ENCODE measurements at regions of chr19 and their contacts with region 1.

Region 1: DNA sequence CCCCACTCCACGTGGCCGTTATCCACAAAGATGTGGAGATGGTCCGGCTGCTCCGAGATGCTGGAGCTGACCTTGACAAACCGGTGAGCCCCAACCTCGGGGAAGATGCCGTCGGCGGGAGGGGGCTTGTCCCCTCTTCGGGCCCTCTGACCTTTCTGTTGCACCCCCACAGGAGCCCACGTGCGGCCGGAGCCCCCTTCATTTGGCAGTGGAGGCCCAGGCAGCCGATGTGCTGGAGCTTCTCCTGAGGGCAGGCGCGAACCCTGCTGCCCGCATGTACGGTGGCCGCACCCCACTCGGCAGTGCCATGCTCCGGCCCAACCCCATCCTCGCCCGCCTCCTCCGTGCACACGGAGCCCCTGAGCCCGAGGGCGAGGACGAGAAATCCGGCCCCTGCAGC is 4.8 kb downstream of the CCER2 start:
- DNase-seq: no peak
- H3K4me3 Mint-ChIP-seq: no peak overlapping the region
- H3K27ac Mint-ChIP-seq: no peak overlapping the region
- H3K4me1 Mint-ChIP-seq: no peaks in the 10 kb centered on the region
- H3K27me3 Mint-ChIP-seq: no peaks in the 10 kb centered on the region
- CTCF ChIP-seq: no peak

Region 2: DNA sequence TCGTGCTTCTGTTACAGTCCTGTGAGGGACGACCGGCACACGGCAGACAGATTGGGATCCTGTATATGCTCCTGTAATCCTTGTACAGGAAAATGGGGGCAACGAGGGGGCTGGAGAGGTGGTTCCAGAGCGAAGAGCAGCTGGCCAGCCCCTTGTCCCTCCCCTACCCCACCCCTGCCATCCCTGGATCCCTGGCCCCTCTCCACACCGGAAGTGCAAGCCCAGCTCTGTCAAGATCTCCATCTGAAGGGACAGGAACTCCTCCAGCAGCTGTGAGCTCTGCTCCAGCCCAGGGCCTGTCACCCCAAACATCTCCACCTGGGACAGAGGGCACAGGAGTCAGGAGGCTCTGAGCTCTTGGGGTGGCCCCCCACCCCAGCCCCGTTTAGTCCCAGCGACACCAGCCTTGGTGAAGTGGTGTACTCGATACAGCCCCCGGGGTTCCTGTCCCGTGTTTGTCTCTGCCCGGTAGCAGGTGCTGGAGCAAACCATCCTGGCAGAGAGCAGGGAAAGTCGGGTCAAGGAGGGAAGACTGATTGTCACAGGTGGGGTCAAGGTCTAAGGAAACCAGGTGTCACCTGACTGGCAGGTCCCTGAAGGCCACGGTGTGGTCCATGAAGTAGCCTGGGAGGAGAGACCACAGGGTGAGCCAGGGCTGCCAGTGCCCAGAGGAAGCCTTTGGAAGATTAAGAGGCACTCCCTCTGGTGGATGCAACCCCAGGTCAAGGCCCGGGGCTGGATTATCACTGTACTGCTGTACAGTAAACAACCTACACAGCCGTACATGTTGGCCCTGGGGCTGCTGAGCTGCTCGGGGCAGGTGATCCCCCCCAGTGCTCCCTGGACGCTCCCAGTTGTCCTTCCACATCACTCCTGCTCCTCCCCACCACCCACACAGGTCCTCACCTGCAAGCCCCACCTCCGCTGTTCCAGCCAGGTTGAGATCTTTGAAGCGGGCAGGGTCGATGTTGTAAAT is 10.6 kb after region 1 on chr19:
- CTCF ChIA-PET with region 1: interaction called, 10 read pairs
- POLR2A ChIA-PET with region 1: interaction called, 5 read pairs
- intact Hi-C with region 1: no loop called
- DNase-seq: peak; percentile 27
- H3K4me3 Mint-ChIP-seq: no peak overlapping the region
- H3K27ac Mint-ChIP-seq: no peak overlapping the region
- H3K4me1 Mint-ChIP-seq: no peaks in the 10 kb centered on the region
- H3K27me3 Mint-ChIP-seq: no peaks in the 10 kb centered on the region
- CTCF ChIP-seq: peak; percentile 13